Activated CD4-positive, alpha-beta memory T cell treated with anti-CD3 and anti-CD28 coated beads for 36 hours (primary cell): ENCODE measurements at regions of chr5 and their contacts with region 1.

Region 1: DNA sequence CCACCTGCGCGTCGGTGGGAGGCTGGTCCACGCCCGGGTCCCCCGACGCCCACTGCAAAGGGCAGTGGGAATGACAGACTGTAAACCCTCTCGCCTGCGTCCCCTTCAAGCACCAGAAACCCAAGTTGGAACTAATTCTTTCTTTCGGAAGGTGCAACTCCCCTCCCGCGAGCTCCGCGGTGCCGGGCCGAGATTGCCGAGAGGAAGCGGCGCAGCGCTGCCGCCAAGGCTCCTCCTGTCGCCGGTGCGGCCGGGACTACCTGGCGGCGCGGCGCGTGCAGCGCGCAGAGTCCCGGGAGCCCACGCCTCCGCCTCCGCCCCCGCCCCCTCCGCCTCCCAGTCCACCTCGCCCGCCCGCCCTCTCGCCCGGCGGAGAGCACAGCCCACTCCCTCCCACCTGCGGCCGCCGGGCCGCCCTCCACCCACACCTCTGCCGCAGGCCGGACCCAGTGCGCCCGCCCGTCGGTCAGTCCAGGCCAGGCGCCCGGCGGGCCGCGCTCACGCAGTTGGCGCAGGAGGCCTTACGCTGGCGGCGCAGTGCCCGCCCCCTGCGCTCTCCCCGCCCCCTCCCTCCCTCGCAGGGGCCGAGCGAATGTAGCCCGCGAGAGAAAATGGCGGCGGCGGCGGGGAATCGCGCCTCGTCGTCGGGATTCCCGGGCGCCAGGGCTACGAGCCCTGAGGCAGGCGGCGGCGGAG is at the start of gene MAP3K1:
- DNase-seq: peak; percentile 83
- H3K4me3 Mint-ChIP-seq: peak within 1 kb of the TSS; percentile 86
- H3K27ac Mint-ChIP-seq: peak within 1 kb of the TSS; percentile 88
- H3K4me1 Mint-ChIP-seq: peaks cover 34% of the 10 kb centered on the region
- H3K27me3 Mint-ChIP-seq: no peaks in the 10 kb centered on the region
- total RNA-seq, gene MAP3K1: 20.5 to 20.6 TPM

Region 2: GRCh38 chr5:56148453-56148971 is 666.6 kb before region 1 on chr5:
- CTCF ChIA-PET with region 1: no interaction called
- POLR2A ChIA-PET with region 1: no interaction called
- intact Hi-C with region 1: loop called (anchors 10 kb)
- DNase-seq: peak; percentile 76
- H3K4me3 Mint-ChIP-seq: peak overlapping the region; percentile 29
- H3K27ac Mint-ChIP-seq: peak overlapping the region; percentile 79
- H3K4me1 Mint-ChIP-seq: peaks cover 67% of the 10 kb centered on the region
- H3K27me3 Mint-ChIP-seq: no peaks in the 10 kb centered on the region

Region 3: DNA sequence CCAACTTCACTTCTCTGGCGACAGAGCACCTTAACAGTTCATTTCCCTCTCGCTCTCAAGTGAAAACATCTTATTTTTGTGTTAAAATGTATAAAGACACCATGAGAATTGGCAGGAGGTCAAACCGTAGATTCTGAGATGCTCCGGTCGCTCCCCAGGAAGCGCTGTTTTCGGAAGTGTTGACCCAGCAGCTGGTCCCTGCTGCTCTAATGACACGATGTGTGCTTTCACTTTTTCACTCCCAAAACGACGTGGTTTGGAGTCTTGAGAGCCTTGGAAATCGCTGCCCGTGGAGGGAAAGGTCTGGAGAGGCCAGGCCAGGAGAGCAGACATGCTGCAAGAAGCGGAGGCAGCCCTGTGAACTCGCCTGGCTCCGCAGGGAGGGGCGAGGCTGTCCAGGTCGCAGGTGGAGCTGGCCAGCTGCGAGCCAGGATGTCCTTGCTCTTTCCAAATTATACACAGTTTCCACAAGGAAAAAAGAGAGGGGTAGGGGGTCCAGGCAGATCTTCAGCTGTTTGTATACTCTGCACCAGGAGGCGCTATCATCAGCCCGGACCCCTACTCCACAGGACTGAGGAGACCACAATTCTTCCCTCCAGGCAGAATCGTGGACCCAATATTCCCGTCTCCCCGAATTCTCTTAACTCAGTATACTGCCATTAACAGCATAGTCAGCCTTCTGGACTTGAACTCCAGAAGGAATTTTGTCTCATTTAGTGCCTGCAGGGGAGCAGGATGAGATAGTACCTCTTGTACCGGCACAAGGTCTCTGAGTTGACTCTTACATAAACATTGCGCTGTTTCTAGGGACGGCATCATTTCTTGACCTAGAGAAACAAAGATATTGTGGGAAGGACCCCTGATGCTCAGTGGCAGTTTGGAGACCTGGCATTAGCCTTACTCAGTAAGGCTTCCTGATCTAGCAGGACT is 333.4 kb before region 1 on chr5:
- CTCF ChIA-PET with region 1: no interaction called
- POLR2A ChIA-PET with region 1: interaction called, 4 read pairs
- intact Hi-C with region 1: loop called (anchors 1 kb)
- DNase-seq: peak; percentile 32
- H3K4me3 Mint-ChIP-seq: peak overlapping the region; percentile 75
- H3K27ac Mint-ChIP-seq: peak overlapping the region; percentile 75
- H3K4me1 Mint-ChIP-seq: peaks cover 41% of the 10 kb centered on the region
- H3K27me3 Mint-ChIP-seq: no peaks in the 10 kb centered on the region

Region 4: DNA sequence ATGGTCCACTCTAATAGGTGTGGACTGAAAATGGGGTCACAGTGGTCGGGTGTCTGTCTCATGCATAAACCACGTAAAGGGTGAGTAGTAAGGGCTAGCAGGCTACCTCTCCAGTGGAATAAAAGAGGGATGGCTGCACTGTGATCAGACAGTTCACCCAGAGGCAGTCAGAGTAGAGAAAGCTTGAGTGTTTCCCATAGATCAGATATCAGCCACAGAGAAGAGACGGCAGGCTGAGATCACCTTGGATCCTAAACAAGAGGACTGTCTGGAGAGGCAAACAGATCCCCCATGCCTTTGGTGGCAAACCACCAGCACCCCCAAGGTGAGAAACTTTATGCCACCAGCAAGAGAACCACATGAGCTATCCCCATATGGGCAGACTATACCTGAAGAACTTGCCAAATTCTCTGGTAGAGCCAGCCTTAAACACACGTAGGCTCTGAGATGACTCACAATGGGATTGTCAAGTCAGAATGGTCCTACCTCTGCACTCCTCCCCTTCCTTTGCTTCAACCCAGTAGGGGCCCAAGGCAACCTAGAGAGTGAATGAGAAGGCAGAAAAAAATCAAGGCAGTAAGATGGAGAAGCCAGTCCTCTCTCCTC is 204.9 kb before region 1 on chr5:
- CTCF ChIA-PET with region 1: no interaction called
- POLR2A ChIA-PET with region 1: no interaction called
- intact Hi-C with region 1: loop called (anchors 5 kb)
- DNase-seq: peak; percentile 73
- H3K4me3 Mint-ChIP-seq: peak overlapping the region; percentile 8
- H3K27ac Mint-ChIP-seq: peak overlapping the region; percentile 85
- H3K4me1 Mint-ChIP-seq: peaks cover 69% of the 10 kb centered on the region
- H3K27me3 Mint-ChIP-seq: no peaks in the 10 kb centered on the region

Region 5: DNA sequence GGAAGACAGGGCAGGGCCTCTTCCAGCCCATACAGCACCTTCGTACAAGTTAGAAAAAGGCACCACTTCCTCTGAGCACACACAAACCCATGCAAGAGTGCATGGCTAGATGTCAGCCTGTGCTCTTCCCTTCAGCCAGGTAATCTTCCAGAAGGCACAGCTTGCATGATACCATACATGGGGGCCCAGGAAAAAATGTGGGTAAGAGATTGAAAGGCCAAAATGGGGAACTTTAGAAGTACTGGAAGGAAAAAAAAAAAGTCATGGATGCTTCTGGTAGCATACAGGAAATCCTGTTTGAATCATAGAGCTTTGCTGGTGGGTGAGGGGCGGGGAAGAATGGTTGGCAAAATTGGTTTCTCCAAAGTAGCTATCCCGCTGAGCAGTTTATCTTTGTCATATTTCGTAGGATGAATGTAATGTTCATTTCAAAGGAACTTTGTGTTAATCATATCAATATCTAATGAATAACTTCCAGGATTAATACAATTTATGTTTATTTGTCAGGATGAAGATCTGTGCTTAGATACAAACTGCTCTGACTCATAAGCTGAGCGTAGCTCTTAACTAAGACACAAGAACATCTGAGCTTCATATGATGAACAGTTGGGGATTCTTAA is 78.0 kb before region 1 on chr5:
- CTCF ChIA-PET with region 1: no interaction called
- POLR2A ChIA-PET with region 1: no interaction called
- intact Hi-C with region 1: loop called (anchors 5 kb)
- DNase-seq: peak; percentile 28
- H3K4me3 Mint-ChIP-seq: no peak overlapping the region
- H3K27ac Mint-ChIP-seq: peak overlapping the region; percentile 66
- H3K4me1 Mint-ChIP-seq: peaks cover 33% of the 10 kb centered on the region
- H3K27me3 Mint-ChIP-seq: no peaks in the 10 kb centered on the region

Region 6: DNA sequence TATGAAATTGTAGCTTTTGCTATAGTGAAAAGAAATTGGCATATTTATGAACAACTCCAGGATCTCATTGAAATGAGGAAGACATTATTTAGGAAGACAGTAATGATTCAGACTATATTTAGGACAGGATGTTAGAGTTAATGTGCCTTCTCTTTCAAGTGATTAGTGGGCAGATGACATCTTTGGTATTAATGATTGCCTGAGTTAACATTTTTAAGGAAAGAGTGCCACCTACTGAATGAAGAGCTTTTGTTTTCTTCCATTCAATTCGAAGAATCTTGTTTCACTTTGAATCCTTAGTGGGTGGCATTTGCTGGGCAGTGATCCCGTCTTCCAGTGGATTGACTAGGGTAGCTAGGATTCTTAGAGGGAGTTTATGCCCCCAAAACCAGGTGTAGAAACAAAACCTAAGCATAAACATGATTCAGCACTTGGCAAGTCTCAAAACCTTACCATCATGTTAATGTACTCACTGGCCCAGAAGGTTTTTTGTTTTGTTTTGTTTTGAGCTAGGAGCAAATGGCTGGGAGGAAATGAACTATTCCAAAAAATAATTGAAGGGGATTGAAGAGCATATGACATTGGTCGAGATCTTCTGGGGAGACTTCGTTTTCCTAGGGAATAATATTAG is 23.4 kb after region 1 on chr5:
- CTCF ChIA-PET with region 1: interaction called, 5 read pairs
- POLR2A ChIA-PET with region 1: interaction called, 4 read pairs
- intact Hi-C with region 1: loop called (anchors 1 kb)
- DNase-seq: no peak
- H3K4me3 Mint-ChIP-seq: peak overlapping the region; percentile 55
- H3K27ac Mint-ChIP-seq: peak overlapping the region; percentile 80
- H3K4me1 Mint-ChIP-seq: peaks cover 85% of the 10 kb centered on the region
- H3K27me3 Mint-ChIP-seq: no peaks in the 10 kb centered on the region

Region 7: DNA sequence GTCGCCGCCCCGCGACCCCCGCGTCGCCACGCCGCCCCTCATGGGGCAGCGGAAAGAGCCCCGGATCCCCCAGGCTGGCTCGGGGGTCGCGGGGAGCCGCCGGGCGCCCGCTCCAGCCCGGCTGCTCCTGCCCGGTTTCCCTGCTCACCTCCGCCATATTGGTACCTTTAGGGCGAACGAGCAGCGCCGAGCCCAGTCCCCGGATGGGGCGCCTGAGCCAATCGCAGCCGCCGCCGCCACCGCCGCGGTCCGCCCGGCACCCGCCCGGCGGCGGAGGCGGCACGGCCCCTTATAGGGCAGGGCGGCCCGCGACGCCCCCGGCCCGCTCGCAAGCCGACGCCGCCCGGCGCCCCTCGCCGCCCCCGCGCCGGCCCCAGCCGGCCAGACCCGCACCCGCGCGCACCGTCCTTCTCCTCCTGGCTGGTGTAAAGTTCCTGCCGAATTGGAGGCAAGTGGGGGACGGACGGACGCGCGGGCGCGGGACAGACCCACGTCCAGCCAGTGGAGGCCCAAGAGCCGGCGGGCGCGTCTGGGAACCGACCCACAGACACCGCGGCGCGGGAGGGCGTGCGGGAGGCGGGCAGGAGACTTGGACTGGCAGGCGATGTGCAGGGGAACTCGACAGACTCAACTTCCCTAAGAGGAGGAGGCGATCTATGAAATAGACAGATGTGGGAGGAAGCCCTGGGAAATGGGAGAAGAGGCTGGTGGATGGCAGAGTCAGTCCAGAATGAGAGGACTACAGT is 137.0 kb after region 1 on chr5 and contains the start of gene MIER3:
- CTCF ChIA-PET with region 1: no interaction called
- POLR2A ChIA-PET with region 1: no interaction called
- intact Hi-C with region 1: loop called (anchors 5 kb)
- DNase-seq: peak; percentile 86
- H3K4me3 Mint-ChIP-seq: peak within 1 kb of the TSS; percentile 96
- H3K27ac Mint-ChIP-seq: peak within 1 kb of the TSS; percentile 69
- H3K4me1 Mint-ChIP-seq: peaks cover 15% of the 10 kb centered on the region
- H3K27me3 Mint-ChIP-seq: peaks cover 11% of the 10 kb centered on the region
- total RNA-seq, gene MIER3: 16.5 to 17.2 TPM